ENCODE measurements at regions of chr1 and their contacts with region 1.

Region 1: DNA sequence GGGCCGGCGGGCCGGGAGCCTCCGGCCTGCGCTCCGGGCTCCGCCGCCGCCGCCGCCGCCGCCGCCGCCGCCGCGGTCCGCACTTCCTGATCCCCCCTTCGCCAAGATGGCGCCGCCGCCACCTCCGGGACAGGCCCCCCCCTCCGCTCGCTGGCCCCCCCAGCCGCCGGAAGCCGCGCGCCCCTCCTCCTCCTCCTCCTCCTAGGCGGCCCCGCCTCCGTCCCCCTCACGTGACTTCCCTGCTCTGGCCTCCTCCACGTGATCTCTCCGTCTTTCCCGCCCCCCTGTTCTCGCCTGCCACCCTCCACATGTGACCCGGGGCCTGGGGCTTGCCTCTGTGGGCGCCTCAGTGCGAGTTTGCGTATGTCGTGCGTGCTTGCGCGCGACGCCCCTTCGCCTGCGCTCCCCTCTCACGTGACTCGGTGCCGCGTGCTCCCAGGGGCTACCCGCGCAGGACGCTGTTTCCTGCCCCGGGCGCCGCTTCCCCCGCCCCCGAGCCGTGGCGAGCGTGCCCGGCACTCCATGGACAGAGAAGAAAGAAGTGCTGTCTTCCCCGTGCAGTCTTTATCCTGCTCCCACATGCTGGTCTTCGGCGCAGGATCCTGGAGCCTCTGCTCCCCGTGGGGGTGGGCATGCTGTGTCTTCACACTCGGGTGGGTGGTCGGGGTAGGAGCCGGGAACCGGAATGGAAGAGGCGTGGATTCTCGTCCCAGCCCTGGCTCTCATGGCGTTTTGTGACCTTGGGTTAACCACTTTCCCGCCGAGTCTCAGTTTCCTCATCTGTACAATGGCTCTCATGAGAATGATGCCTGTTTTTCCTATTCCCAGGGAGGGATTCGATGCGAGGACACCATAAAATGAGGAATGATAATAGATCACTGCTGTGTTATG is at the start of gene UBE2Q1:
- DNase-seq: peak; percentile 100
- H3K4me3 Mint-ChIP-seq: peak within 1 kb of the TSS; percentile 98
- H3K27ac Mint-ChIP-seq: peak within 1 kb of the TSS; percentile 98
- H3K4me1 Mint-ChIP-seq: peaks cover 38% of the 10 kb centered on the region
- H3K27me3 Mint-ChIP-seq: no peaks in the 10 kb centered on the region
- total RNA-seq, gene UBE2Q1: 86.6 and 104 TPM in 2 replicates

Region 2: GRCh38 chr1:154220071-154220969 is 338.5 kb before region 1 on chr1 and contains the start of gene UBAP2L:
- intact Hi-C with region 1: loop called (anchors 2 kb)
- DNase-seq: peak; percentile 100
- H3K4me3 Mint-ChIP-seq: peak within 1 kb of the TSS; percentile 96
- H3K27ac Mint-ChIP-seq: peak within 1 kb of the TSS; percentile 95
- H3K4me1 Mint-ChIP-seq: peaks cover 55% of the 10 kb centered on the region
- H3K27me3 Mint-ChIP-seq: peaks cover 3% of the 10 kb centered on the region
- total RNA-seq, gene UBAP2L: 277 and 281 TPM in 2 replicates

Region 3: DNA sequence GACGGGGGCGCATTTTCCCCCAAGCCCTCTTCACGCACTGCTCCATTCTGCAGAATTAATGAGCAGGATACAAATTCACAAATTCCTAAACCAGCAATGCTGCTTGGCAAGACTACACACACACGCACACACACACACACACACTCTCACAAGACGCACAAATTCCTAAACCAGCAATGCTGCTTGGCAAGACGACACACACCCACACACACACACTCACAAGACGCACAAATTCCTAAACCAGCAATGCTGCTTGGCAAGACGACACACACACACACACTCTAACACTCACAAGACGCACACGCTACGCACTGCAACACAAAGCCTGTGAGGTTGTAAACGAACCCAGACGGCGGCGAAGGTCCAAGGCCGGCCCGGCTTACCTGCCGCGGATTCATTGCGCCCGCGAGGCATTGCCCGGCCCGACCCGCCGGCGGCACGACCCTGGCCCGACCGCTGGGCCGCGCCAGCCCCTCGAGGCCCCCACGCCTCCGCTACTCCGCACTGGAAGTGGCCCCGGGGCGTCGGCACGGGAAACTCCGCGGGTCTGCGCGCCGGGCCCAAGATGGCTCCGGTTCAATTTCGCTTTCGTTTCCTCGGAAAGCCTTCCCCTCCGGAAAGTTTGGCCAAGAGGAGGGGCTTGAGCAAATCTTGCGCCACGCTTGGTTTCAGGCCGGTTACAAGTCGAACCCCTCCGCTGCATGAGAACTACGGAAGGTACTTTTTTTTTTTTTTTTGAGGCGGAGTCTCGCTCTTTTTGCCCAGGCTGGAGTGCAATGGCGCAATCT is 49.0 kb after region 1 on chr1 and contains the start of gene ADAR:
- intact Hi-C with region 1: loop called (anchors 1 kb)
- DNase-seq: peak; percentile 98
- H3K4me3 Mint-ChIP-seq: peak within 1 kb of the TSS; percentile 92
- H3K27ac Mint-ChIP-seq: peak within 1 kb of the TSS; percentile 99
- H3K4me1 Mint-ChIP-seq: peaks cover 72% of the 10 kb centered on the region
- H3K27me3 Mint-ChIP-seq: no peaks in the 10 kb centered on the region
- total RNA-seq, gene ADAR: 293 and 306 TPM in 2 replicates

Region 4: GRCh38 chr1:154747740-154748404 is 189.1 kb after region 1 on chr1:
- intact Hi-C with region 1: loop called (anchors 2 kb)
- DNase-seq: peak; percentile 91
- H3K4me3 Mint-ChIP-seq: peak overlapping the region; percentile 90
- H3K27ac Mint-ChIP-seq: peak overlapping the region; percentile 94
- H3K4me1 Mint-ChIP-seq: peaks cover 87% of the 10 kb centered on the region
- H3K27me3 Mint-ChIP-seq: peaks cover 2% of the 10 kb centered on the region

Region 5: GRCh38 chr1:154760469-154760933 is 201.7 kb after region 1 on chr1:
- intact Hi-C with region 1: no loop called
- DNase-seq: peak; percentile 96
- H3K4me3 Mint-ChIP-seq: peak overlapping the region; percentile 82
- H3K27ac Mint-ChIP-seq: peak overlapping the region; percentile 96
- H3K4me1 Mint-ChIP-seq: peaks cover 46% of the 10 kb centered on the region
- H3K27me3 Mint-ChIP-seq: peaks cover 18% of the 10 kb centered on the region

Region 6: GRCh38 chr1:154936555-154937084 is 377.8 kb after region 1 on chr1 and contains the start of gene PMVK:
- intact Hi-C with region 1: loop called (anchors 1 kb)
- DNase-seq: peak; percentile 98
- H3K4me3 Mint-ChIP-seq: peak within 1 kb of the TSS; percentile 91
- H3K27ac Mint-ChIP-seq: peak within 1 kb of the TSS; percentile 91
- H3K4me1 Mint-ChIP-seq: peaks cover 46% of the 10 kb centered on the region
- H3K27me3 Mint-ChIP-seq: no peaks in the 10 kb centered on the region
- total RNA-seq, gene PMVK: 47.4 and 47.7 TPM in 2 replicates

Region 7: DNA sequence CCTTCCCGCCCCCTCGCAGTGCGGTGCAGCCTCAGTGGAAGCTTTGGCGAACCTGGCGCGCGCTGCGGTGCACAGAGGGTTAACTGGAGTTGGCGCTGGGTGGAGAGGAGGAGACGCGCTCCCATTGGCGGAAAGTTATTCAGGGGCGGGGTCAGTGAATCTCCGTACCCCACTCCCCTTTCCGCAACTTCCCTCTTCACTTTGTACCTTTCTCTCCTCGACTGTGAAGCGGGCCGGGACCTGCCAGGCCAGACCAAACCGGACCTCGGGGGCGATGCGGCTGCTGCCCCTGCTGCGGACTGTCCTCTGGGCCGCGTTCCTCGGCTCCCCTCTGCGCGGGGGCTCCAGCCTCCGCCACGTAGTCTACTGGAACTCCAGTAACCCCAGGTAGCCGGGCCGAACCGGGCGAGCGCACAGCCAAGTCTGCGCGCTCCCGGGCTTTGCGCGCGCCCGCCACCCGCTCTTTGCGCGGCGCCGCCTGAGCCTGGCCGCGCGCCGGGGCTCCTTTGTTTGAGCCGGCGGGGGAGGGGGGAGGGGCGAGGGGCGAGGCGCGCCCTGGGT is 504.8 kb after region 1 on chr1 and contains the start of gene EFNA4:
- intact Hi-C with region 1: loop called (anchors 2 kb)
- DNase-seq: peak; percentile 96
- H3K4me3 Mint-ChIP-seq: peak within 1 kb of the TSS; percentile 80
- H3K27ac Mint-ChIP-seq: peak within 1 kb of the TSS; percentile 54
- H3K4me1 Mint-ChIP-seq: peaks cover 23% of the 10 kb centered on the region
- H3K27me3 Mint-ChIP-seq: no peaks in the 10 kb centered on the region
- total RNA-seq, gene EFNA4: 5.8 and 6.2 TPM in 2 replicates